ENCODE measurements at regions of chr17 and their contacts with region 1.

Region 1: DNA sequence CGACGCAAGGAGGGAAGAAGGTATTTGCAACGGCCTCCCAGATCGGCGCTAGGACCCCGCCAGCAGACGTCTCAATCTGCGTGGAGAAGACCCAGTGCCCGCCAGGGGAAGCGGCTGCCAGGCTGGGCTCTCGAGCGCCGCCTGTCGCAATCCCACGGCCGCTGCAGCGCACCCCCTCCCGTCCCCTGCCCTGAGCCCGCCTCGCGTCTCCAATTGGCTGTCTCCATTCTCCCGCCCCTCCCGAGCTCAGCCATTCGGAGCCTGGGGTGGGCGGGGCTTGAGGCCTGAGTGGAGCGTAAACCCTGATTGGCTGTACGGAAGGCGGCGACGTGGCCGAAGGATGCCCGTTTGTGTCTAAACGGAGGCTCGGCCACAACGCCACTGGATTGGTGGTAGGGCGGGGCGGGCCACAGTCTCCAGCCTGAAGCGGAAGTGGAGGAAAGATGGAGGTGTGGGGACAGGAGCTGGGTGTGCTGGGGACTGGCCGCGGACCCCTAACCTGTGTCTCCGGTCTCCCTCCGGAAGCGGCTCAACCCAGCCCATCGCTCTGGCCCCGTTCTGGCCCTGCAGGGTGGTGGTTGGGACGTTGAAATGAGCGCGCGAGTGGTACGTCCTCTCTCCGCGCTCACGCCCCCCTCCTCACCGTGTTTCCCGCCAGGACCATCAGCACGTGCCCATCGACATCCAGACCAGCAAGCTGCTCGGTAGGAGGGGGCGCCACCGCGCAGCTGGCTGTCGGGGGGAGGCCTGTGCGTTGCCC is at the start of gene CDK5RAP3:
- DNase-seq: peak; percentile 100
- ATAC-seq: peak; percentile 82
- H3K4me3 ChIP-seq: peak within 1 kb of the TSS; percentile 73
- H3K27ac ChIP-seq: peak within 1 kb of the TSS; percentile 58
- H3K4me1 ChIP-seq: peaks cover 49% of the 10 kb centered on the region
- H3K27me3 ChIP-seq: no peaks in the 10 kb centered on the region
- CTCF ChIP-seq: peak; percentile 94
- total RNA-seq, gene CDK5RAP3: 193 and 209 TPM in 2 replicates

Region 2: DNA sequence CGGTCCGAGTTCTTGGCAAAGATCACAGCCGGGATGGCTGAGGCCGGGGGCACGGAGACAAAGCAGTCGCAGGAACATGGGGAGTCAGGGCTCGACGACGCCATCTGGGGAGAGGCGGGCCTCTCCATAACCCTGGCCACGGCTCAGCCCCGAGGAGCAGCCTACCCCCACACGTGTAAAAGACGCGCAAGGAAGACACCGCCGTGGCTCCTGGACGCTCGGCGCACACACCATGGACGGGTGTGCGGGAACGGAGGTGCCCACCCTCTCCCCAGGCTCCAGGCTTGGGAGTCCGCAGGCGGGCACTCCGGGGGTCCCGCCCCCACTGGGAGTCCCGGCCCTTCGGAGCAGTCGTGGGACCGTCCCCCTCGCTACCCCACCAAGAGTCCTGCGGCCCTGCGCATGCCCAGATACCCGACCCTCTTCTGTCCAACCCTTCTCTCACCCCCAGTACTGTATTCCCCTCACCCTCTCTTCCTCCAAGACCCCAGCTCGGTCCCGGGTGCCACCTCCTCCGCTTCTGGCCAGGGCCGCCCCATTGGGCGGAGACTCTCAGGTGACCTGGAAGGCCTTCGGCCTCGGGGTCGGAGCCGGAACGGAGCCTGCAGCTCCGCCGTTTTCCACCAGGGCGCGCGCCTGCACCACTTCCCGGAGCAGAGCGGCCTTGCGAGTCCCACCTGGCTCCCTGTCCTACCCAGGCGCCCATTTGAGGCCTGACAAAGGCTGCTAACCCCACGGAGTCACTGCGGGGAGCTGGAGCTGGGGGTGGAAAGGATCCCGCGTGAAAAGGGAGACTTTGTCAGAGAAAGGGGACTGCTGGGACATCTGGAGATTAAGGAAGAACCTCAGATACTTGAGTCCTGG is 129.9 kb before region 1 on chr17 and contains the start of gene SCRN2:
- CTCF ChIA-PET with region 1: interaction called, 4 read pairs
- POLR2A ChIA-PET with region 1: no interaction called
- intact Hi-C with region 1: loop called (anchors 1 kb)
- DNase-seq: peak; percentile 97
- ATAC-seq: peak; percentile 85
- H3K4me3 ChIP-seq: peak within 1 kb of the TSS; percentile 80
- H3K27ac ChIP-seq: no peak within 1 kb of the TSS
- H3K4me1 ChIP-seq: peaks cover 29% of the 10 kb centered on the region
- H3K27me3 ChIP-seq: no peaks in the 10 kb centered on the region
- CTCF ChIP-seq: peak; percentile 99
- total RNA-seq, gene SCRN2: 44.0 and 47.9 TPM in 2 replicates

Region 3: GRCh38 chr17:47895856-47896671 is 74.8 kb before region 1 on chr17 and contains the start of gene SP2:
- CTCF ChIA-PET with region 1: interaction called, 8 read pairs
- POLR2A ChIA-PET with region 1: interaction called, 6 read pairs
- intact Hi-C with region 1: loop called (anchors 1 kb)
- DNase-seq: peak; percentile 100
- ATAC-seq: peak; percentile 90
- H3K4me3 ChIP-seq: peak within 1 kb of the TSS; percentile 78
- H3K27ac ChIP-seq: peak within 1 kb of the TSS; percentile 77
- H3K4me1 ChIP-seq: peaks cover 30% of the 10 kb centered on the region
- H3K27me3 ChIP-seq: no peaks in the 10 kb centered on the region
- CTCF ChIP-seq: no peak
- total RNA-seq, gene SP2: 3.9 and 6.5 TPM in 2 replicates

Region 4: DNA sequence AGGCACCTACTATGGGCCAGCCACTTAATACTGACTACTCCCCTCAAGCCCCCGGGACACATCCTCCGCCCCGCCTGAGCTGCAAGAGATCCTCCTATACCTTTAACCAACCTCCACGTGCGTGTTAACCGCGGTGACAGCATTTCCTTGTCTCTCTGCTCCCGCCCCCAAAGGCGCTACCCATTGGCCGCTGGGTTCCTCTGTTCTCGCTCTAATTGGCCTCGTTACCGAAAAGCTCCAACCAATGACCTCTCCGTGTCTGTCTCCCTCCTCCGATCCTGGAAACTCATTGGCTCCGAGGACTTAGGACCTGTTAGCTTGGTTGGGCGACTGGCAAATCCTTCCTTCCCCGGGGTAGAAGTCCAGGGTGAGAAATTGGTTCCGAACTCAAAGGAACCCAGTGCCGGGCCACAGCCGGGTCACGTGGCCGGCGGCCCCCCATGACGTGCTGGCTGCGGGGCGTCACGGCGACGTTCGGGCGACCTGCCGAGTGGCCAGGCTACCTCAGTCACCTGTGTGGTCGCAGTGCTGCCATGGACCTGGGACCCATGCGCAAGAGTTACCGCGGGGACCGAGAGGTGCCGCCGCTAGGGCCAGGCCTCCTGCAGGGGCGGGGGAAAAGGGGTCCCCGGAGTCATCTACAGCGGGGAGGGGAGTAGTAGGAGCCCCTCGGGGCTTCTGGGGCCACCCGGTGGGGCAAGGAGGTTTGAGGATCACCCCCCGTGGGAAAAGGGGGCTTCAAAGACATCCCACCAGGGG is 29.5 kb before region 1 on chr17 and contains the start of gene PNPO:
- CTCF ChIA-PET with region 1: interaction called, 19 read pairs
- POLR2A ChIA-PET with region 1: interaction called, 8 read pairs
- intact Hi-C with region 1: loop called (anchors 2 kb)
- DNase-seq: peak; percentile 100
- ATAC-seq: peak; percentile 98
- H3K4me3 ChIP-seq: peak within 1 kb of the TSS; percentile 77
- H3K27ac ChIP-seq: peak within 1 kb of the TSS; percentile 24; the same call in 1 of the 2 replicates
- H3K4me1 ChIP-seq: peaks cover 24% of the 10 kb centered on the region
- H3K27me3 ChIP-seq: no peaks in the 10 kb centered on the region
- CTCF ChIP-seq: no peak; the same call in 1 of the 2 replicates
- total RNA-seq, gene PNPO: 49.8 and 57.5 TPM in 2 replicates

Region 5: GRCh38 chr17:47949136-47949759 is 21.6 kb before region 1 on chr17:
- CTCF ChIA-PET with region 1: interaction called, 60 read pairs
- POLR2A ChIA-PET with region 1: interaction called, 30 read pairs
- intact Hi-C with region 1: loop called (anchors 1 kb)
- DNase-seq: peak; percentile 94
- ATAC-seq: peak; percentile 69
- H3K4me3 ChIP-seq: peak overlapping the region; percentile 49
- H3K27ac ChIP-seq: peak overlapping the region; percentile 96
- H3K4me1 ChIP-seq: peaks cover 34% of the 10 kb centered on the region
- H3K27me3 ChIP-seq: no peaks in the 10 kb centered on the region
- CTCF ChIP-seq: peak; percentile 99

Region 6: GRCh38 chr17:47992216-47992615 is 21.3 kb after region 1 on chr17:
- CTCF ChIA-PET with region 1: no interaction called
- POLR2A ChIA-PET with region 1: no interaction called
- intact Hi-C with region 1: no loop called
- DNase-seq: no peak
- ATAC-seq: no peak
- H3K4me3 ChIP-seq: no peak overlapping the region
- H3K27ac ChIP-seq: no peak overlapping the region
- H3K4me1 ChIP-seq: no peaks in the 10 kb centered on the region
- H3K27me3 ChIP-seq: no peaks in the 10 kb centered on the region
- CTCF ChIP-seq: no peak

Region 7: GRCh38 chr17:48002266-48002915 is 31.5 kb after region 1 on chr17:
- CTCF ChIA-PET with region 1: interaction called, 6 read pairs
- POLR2A ChIA-PET with region 1: interaction called, 5 read pairs
- intact Hi-C with region 1: loop called (anchors 2 kb)
- DNase-seq: peak; percentile 94
- ATAC-seq: peak; percentile 87
- H3K4me3 ChIP-seq: peak overlapping the region; percentile 29; the same call in 1 of the 2 replicates
- H3K27ac ChIP-seq: peak overlapping the region; percentile 97
- H3K4me1 ChIP-seq: peaks cover 54% of the 10 kb centered on the region
- H3K27me3 ChIP-seq: no peaks in the 10 kb centered on the region
- CTCF ChIP-seq: no peak

Region 8: DNA sequence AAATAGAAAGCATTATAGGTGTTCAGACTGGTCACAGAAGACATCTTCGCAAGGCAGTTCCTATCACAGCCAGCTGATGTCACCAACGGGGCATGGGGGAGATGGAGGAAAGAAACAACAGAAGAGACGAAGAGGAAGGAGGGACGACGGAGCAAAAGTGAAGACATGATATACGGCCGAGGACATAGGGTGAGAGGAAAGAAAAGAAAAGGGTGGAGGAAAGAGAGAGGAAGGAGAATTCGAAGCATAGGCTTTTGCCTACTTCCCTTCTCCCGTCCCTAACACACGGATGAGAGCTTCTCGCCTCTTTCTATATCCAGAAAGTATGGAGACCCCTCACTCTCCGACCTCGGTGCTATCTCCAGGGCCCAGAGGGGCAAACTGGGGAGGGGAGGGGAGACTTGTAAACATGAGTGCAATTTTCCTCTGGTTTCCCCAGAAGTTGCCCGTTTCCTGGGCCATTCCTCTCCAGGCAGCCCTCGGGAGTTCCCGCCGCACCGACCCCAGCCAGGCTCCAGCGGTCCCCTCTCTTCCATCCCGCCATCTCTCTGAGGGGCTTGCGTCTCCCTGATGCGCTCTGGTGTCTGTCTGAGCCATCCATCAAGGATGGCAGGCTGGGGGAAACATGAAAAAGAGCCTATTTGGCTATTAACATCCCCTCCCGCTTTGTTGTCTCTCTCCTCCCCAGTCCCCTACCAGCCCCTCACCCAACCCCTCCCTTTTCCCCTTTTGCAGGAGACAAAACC is 40.7 kb after region 1 on chr17:
- CTCF ChIA-PET with region 1: interaction called, 8 read pairs
- POLR2A ChIA-PET with region 1: no interaction called
- intact Hi-C with region 1: loop called (anchors 2 kb)
- DNase-seq: peak; percentile 82
- ATAC-seq: peak; percentile 84
- H3K4me3 ChIP-seq: peak overlapping the region; percentile 73
- H3K27ac ChIP-seq: no peak overlapping the region
- H3K4me1 ChIP-seq: peaks cover 12% of the 10 kb centered on the region
- H3K27me3 ChIP-seq: no peaks in the 10 kb centered on the region
- CTCF ChIP-seq: peak; percentile 81